GM13976 (cell line): ENCODE measurements at regions of chr3 and their contacts with region 1.

Region 1: GRCh38 chr3:24237971-24238767 is 256.5 kb downstream of the THRB start:
- DNase-seq: peak; percentile 38
- CTCF ChIP-seq: peak; percentile 62

Region 2: DNA sequence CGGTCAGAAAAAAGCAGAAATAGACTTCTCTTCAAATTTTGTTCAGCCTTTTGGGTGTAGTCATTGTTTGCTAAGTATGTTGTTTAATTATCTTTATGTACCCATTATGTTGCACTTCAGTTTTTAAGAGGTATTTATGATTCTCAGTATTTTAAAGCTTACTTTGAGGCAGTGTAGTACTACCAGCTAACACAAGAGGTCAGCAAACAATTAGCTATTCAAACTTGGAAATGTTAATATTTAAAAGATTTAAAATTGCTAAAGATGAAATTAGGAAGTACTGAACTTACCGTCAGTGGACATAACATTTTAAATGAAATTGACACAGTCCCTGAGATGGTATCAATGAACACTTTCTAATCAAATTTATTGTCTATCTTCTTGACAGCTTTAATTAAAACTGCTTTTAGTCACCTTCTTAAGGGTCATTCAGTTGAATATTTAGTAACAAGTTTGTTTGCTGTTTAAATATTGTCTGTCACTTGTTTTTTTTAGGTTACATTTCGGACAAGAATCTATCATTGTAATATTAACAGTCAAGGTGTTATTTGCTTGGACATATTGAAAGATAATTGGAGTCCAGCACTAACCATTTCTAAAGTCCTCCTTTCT is 349.4 kb before region 1 on chr3:
- in situ Hi-C with region 1: loop called (anchors 25 kb)
- DNase-seq: no peak
- CTCF ChIP-seq: peak; percentile 44

Region 3: DNA sequence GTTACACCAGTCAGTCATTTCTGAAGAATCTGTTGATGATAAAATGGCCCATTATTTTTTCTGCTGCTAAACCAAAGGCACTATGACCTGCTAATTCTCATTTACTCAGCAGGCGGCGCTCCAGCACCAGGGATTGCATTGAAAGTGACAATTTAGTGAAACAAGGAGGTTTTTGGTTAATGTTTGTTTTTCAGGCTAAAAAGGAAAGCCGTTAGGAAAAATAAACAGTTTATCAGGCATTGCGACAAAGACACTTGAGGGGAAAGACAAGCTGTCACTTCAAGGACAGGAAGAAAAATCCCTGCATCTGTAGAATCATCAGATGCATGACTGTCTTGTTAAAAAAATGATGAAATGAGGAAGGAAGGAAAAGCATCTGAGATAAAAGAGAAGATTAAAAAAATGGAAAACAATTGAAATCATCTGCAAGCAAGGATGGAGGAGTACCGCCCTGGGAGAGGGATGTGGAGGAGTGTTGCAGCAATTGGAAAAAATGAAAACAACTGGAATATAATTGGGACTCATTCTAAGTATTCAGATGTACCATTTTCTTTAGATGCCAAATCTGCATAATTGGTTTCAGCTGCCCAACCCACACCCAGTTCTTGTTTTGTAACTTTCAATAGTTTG is 239.0 kb before region 1 on chr3:
- in situ Hi-C with region 1: loop called (anchors 5 kb)
- DNase-seq: peak; percentile 52
- CTCF ChIP-seq: peak; percentile 84

Region 4: GRCh38 chr3:24377218-24377993 is 139.2 kb after region 1 on chr3:
- in situ Hi-C with region 1: no loop called
- DNase-seq: no peak
- CTCF ChIP-seq: no peak

Region 5: DNA sequence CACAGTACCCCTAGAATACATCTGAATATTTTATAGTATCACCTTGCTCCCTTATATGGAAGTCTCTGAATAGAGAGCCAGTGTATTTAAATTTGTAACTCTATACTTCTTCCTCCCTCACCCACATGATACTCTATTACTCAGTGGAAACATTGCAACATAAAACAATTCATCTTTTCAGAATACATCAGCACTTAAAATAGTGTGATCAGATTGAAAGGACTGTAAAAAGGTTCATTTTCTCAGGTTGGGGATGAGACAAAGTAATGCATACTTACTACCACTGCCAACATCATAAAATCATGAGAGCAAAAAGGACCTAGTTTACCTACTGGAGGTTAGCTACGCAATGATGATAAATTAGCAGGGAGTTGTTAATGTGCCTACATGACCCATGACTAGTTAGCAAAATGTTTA is 270.3 kb after region 1 on chr3:
- in situ Hi-C with region 1: no loop called
- DNase-seq: no peak
- CTCF ChIP-seq: no peak